Naive thymus-derived CD4-positive, alpha-beta T cell (primary cell): ENCODE measurements at regions of chr7 and their contacts with region 1.

Region 1: DNA sequence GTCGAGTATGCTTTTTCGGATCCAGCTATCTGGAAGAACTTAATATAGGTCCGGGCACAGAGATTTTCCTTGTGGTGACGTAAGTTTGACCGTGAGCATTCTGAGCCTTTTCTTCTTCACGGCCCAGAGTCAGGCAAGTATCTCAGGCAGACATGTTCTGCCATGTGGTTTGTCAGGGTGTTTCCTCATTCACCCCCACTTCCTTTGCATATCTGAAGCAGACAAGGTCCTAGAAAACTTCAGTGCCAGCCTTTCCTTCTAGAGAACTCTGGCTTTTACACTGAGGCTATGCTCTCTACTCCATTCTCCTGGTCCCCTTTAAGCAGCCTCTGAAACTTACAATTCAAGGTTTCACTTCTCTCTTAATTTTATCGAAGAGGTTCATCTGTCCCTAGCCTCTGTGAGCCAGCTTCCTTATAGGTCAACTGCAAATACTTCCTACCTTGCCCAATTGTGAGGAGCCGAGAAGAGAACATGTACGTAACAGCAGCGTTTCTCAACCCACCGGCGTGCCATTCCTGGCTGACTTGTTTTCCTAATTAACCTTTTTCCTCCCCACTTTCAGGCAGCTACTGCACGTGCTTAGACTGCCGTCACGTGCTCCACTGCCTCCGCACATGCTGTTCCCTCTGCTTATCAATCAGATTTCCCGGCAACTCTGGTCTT is 47.3 kb downstream of the CDCA7L start:
- DNase-seq: peak in 6 of 9 donors; percentile 36 to 59 (median 48)
- ATAC-seq: peak; percentile 77
- H3K4me3 ChIP-seq: peak overlapping the region; percentile 46
- H3K4me3 Mint-ChIP-seq: peak overlapping the region; percentile 81 to 90 (median 86)
- H3K27ac ChIP-seq: peak overlapping the region; percentile 46
- H3K27ac Mint-ChIP-seq: peak overlapping the region; percentile 90 to 98 (median 96)
- H3K4me1 ChIP-seq: peaks cover 0 to 19% of the 10 kb centered on the region in 2 donors
- H3K4me1 Mint-ChIP-seq: peaks cover 17 to 38% (median 25%) of the 10 kb centered on the region in 7 donors
- H3K27me3 ChIP-seq: no peaks in the 10 kb centered on the region
- H3K27me3 Mint-ChIP-seq: no peaks in the 10 kb centered on the region

Region 2: GRCh38 chr7:21850531-21851285 is 47.7 kb before region 1 on chr7:
- CTCF ChIA-PET with region 1: no interaction called
- POLR2A ChIA-PET with region 1: no interaction called
- intact Hi-C with region 1: loop called in 1 of 2 experiments (anchors 5 kb)
- DNase-seq: no peak
- ATAC-seq: no peak
- H3K4me3 ChIP-seq: peak overlapping the region; percentile 27
- H3K4me3 Mint-ChIP-seq: peak overlapping the region in 9 of 10 donors; percentile 13 to 91 (median 78)
- H3K27ac ChIP-seq: no peak overlapping the region
- H3K27ac Mint-ChIP-seq: peak overlapping the region in 8 of 9 donors; percentile 85 to 97 (median 92)
- H3K4me1 ChIP-seq: peaks cover 0 to 20% of the 10 kb centered on the region in 2 donors
- H3K4me1 Mint-ChIP-seq: peaks cover 6 to 44% (median 34%) of the 10 kb centered on the region in 7 donors
- H3K27me3 ChIP-seq: no peaks in the 10 kb centered on the region
- H3K27me3 Mint-ChIP-seq: peaks cover 0 to 5% (median 0%) of the 10 kb centered on the region in 5 donors